ENCODE measurements at regions of chr4 and their contacts with region 1.

Region 1: DNA sequence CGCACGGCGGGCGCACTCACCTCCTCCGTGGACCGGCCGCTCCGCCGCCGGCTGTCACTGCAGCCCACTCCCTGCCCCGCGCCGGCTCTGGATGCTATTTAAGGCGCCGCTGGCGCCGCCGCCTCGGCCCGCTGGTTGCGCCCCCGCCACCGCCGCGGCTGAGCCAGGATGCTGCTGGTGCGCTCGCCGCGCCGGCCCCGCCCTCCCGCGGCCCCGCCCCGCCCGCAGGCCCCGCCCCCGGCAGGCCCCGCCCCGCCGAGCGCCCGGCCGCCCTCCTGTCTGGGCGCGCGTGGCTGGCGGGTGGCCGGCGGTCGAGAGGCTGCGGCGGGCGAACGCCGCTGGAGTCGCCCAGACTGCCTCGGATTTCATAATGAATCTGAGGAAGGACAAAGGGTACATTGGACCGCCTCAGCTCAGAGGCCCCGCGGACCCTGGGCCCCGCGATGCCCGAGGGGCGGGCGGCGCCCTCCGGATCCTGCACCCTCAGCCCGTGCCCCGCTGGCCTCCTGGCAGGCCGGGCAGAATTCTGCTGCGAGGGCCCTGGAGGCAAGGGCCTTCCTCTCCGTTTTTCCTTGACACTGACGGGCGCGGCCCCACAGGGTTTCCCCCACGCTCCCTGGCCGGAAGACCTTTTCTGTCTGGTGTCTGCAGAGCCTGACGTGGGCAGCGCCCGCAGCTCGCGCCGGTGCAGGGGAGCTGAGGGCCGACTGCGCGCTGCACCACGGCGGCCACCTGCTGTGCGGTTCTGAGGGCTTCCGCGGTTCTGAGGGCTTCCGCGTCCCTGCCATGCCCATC is at the start of gene ACSL1:
- DNase-seq: peak; percentile 96
- total RNA-seq, gene ACSL1: 92.4 to 95.4 TPM

Region 2: GRCh38 chr4:184649026-184649970 is 176.8 kb before region 1 on chr4 and contains the starts of genes CASP3 and PRIMPOL:
- intact Hi-C with region 1: loop called in 1 of 2 experiments (anchors 10 kb)
- DNase-seq: peak; percentile 99
- total RNA-seq, gene CASP3: 16.8 to 17.1 TPM
- total RNA-seq, gene PRIMPOL: 18.1 to 18.8 TPM

Region 3: GRCh38 chr4:184762100-184762499 is 64.0 kb before region 1 on chr4:
- intact Hi-C with region 1: loop called in 1 of 2 experiments (anchors 10 kb)
- DNase-seq: no peak

Region 4: DNA sequence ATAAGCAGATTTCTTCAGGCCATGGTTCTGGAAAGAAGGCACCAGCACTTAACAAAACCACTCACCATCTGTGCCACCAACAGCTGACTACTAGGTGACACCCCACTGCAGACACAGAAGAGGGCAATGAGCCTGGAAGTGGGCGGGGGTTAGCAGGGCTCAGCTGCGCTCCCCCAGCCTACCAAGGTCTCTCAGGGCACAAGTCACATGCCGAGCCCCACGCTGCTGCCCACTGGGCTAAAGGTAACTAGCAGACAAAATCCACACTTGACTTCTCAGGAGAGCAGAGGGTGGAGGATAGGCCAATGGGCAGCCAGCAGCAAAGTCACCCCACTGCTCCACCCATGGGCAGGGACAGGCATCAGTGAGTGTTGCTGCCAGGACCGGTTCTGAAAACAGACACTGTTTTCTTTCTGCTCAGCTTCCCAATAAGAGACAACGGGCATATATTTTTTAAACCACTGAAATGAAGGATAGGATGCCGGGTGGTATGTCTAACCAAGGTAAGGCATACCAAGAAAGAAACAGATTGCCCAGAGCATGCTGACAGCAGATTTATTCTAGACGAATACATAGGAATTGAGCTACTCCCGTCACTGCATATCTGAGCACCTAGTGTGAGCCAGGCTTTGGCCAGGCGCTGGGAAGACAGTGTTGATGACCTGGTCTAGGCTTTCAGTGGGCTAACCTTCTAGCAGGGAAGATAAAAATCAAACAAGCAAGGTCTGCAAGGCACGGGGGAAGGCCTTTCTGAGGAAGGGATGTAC is 20.4 kb before region 1 on chr4:
- intact Hi-C with region 1: no loop called
- DNase-seq: no peak